ENCODE measurements at regions of chr9 and their contacts with region 1.

Region 1: DNA sequence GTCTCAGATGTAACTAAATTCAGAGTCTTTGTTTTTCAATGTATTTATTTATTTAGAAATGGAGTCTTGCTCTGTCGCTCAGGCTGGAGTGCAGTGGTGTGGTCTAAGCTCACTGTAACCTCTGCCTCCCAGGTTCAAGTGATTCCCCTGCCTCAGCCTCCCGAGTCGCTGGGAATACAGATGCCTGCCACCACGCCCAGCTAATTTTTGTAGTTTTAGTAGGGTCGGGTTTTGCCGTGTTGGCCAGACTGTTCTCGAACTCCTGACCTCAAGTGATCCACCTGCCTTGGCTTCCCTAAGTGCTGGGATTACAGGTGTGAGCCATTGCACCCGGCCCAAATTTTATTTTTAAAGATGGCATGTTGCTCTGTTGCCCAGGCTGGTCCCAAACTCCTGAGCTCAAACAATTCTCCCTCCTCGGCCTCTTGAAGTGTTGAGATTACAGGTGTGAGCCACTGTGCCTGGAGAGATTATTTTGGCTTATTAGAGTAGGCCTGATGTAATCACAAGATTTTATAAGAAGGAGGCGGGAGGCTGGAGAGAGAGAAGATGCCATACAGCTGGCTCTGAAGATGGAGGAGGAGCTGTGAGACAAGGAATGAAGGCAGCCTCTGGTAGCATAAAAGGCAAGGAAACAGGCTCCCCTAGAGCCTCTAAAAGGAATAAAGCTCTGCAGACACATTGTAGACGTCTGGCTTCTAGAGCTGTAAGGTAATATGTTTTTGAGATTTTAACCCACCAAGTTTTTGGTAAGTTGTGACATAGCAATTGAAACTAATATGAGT is 12.9 kb upstream of the KLF9 start:
- DNase-seq: no peak
- ATAC-seq: no peak
- H3K4me3 ChIP-seq: no peak overlapping the region
- H3K27ac ChIP-seq: peak overlapping the region in 1 of 12 donors; percentile 53
- H3K4me1 ChIP-seq: peaks cover 0 to 8% (median 5%) of the 10 kb centered on the region in 12 donors
- H3K27me3 ChIP-seq: no peaks in the 10 kb centered on the region
- CTCF ChIP-seq: no peak
- POLR2A ChIP-seq: no peak

Region 2: DNA sequence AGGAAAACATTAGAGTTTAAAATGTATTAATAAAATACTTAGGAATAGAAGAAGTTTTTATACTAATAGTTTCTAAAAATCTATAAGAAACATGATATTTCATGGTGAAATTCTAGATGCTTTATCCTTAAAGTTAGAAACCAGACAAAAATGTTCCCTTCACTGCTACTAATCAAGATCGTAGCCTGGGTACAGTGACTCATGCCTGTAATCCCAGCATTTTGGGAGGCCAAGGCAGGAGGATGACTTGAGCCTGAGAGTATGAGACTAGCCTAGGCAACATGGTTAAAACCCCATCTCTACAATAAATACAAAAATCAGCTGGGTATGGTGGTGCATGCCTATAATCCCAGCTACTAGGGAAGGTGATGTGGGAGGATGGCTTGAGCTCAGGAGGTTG is 17.6 kb after region 1 on chr9:
- intact Hi-C with region 1: loop called in 1 of 10 experiments (anchors 1 kb)
- DNase-seq: no peak
- ATAC-seq: no peak
- H3K4me3 ChIP-seq: no peak overlapping the region
- H3K27ac ChIP-seq: no peak overlapping the region
- H3K4me1 ChIP-seq: peaks cover 0 to 3% (median 0%) of the 10 kb centered on the region in 12 donors
- H3K27me3 ChIP-seq: no peaks in the 10 kb centered on the region
- CTCF ChIP-seq: no peak
- POLR2A ChIP-seq: no peak

Measured in heart left ventricle (tissue), 16 donors.